A673 (cell line): ENCODE measurements at regions of chr10 and their contacts with region 1.

Region 1: DNA sequence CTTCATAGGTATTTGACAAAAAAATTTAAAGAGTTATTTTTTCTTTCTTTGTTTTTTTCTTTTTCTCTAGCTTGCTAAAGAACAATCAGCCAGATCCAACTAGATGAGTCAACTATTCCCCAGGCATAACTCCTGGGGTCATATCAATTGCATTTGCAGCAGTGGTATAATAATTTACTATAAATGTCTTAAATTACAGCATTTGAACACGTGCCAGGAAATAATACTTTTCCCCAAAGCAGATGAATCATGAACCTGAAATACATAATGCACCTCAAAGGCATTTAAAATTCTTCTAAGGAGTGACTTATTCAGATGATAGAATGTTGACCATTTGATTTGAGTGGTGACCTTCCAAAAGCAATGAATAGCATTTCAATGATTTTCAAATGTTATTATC is 190.1 kb downstream of the LRRTM3 start:
- DNase-seq: no peak
- H3K4me3 ChIP-seq: no peak overlapping the region
- H3K27ac ChIP-seq: no peak overlapping the region
- H3K4me1 ChIP-seq: no peaks in the 10 kb centered on the region
- H3K27me3 ChIP-seq: no peaks in the 10 kb centered on the region
- CTCF ChIP-seq: no peak

Region 2: GRCh38 chr10:66964946-66965345 is 151.0 kb before region 1 on chr10:
- CTCF ChIA-PET with region 1: no interaction called
- POLR2A ChIA-PET with region 1: interaction called, 10 read pairs
- intact Hi-C with region 1: no loop called
- DNase-seq: no peak
- H3K4me3 ChIP-seq: no peak overlapping the region
- H3K27ac ChIP-seq: no peak overlapping the region
- H3K4me1 ChIP-seq: no peaks in the 10 kb centered on the region
- H3K27me3 ChIP-seq: no peaks in the 10 kb centered on the region
- CTCF ChIP-seq: no peak

Region 3: DNA sequence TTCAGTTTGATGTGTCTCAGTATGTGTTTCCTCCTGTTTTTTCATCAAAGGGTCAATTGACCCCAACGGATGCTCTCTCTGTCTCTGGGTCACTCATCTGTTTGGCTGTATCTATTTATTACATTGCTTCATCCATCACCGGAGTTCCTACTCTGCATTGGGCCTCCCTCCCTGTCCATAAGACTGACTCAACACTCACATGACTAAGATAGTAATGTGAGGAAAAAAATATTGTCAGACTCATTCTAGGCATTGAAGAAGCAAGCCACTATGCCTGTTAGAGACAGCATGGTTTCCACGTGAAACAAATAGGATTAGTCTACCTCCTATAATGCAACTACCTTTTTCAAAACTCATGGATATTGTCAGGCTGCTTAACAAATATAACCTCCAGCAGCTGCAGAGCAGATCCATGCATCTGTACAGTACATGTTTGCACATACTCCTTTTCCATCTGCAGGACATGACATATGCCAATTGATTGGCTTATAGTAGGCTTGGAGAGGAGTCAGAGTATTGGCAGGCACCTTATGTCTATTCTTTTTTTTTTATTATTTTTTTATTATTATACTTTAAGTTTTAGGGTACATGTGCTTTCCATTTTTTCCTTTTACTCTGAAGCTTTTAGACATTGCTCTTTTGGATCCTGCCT is 85.1 kb after region 1 on chr10:
- CTCF ChIA-PET with region 1: no interaction called
- POLR2A ChIA-PET with region 1: no interaction called
- intact Hi-C with region 1: no loop called
- DNase-seq: no peak
- H3K4me3 ChIP-seq: no peak overlapping the region
- H3K27ac ChIP-seq: no peak overlapping the region
- H3K4me1 ChIP-seq: no peaks in the 10 kb centered on the region
- H3K27me3 ChIP-seq: no peaks in the 10 kb centered on the region
- CTCF ChIP-seq: no peak

Region 4: GRCh38 chr10:67242528-67242927 is 126.6 kb after region 1 on chr10:
- CTCF ChIA-PET with region 1: no interaction called
- POLR2A ChIA-PET with region 1: no interaction called
- intact Hi-C with region 1: no loop called
- DNase-seq: peak; percentile 3
- H3K4me3 ChIP-seq: no peak overlapping the region
- H3K27ac ChIP-seq: no peak overlapping the region
- H3K4me1 ChIP-seq: no peaks in the 10 kb centered on the region
- H3K27me3 ChIP-seq: no peaks in the 10 kb centered on the region
- CTCF ChIP-seq: no peak